Activated CD4-positive, alpha-beta T cell treated with anti-CD3 and anti-CD28 coated beads for 36 hours (primary cell): ENCODE measurements at regions of chr17 and their contacts with region 1.

Region 1: GRCh38 chr17:57783106-57783742 is 38.1 kb upstream of the CCDC182 start:
- DNase-seq: peak; percentile 91
- ATAC-seq: peak; percentile 97
- H3K4me3 Mint-ChIP-seq: no peak overlapping the region
- H3K27ac Mint-ChIP-seq: no peak overlapping the region
- H3K4me1 Mint-ChIP-seq: peaks cover 2% of the 10 kb centered on the region
- H3K27me3 Mint-ChIP-seq: peaks cover 21% of the 10 kb centered on the region

Region 2: GRCh38 chr17:57130761-57131461 is 652.3 kb before region 1 on chr17:
- CTCF ChIA-PET with region 1: interaction called, 3 read pairs
- POLR2A ChIA-PET with region 1: no interaction called
- intact Hi-C with region 1: loop called in 1 of 2 experiments (anchors 1 kb)
- DNase-seq: peak; percentile 91
- ATAC-seq: peak; percentile 84
- H3K4me3 Mint-ChIP-seq: no peak overlapping the region
- H3K27ac Mint-ChIP-seq: no peak overlapping the region
- H3K4me1 Mint-ChIP-seq: peaks cover 5% of the 10 kb centered on the region
- H3K27me3 Mint-ChIP-seq: no peaks in the 10 kb centered on the region

Region 3: DNA sequence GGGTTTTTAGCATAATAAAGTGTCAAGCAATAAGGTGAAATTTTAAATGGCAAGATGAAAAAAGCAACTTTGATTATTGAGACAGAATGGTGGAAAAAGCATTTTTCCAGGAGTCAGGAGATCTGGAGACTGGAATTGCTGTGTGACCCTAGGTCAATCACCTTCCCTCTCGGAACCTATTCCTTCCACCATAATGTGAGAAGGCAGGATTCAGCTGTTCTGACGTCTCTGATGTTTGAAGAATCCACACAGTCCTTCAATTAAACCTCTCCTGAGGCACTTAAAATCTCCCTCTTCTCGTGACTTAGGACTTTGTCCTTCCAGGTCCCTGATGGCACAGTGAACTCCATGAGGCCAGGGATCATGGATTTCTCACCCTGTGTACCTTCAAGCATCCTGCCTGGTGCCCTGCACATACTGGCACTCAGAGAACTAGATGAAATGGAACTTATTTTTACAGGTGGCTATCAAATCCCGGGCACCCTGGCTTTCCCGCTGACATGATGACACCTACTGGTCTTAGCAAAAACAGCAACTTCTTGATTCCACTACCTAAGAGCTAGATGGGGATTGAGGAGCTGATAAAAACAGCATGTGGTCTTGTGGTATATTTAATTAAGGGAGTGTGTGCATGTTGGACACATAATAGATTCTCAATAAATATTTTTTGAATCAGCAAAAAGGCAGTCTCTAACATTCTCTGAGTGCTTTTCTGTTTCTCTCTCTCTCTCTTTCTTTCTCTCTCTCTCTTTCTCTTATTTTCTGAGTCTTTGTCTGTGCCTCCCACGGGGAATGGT is 35.8 kb before region 1 on chr17:
- CTCF ChIA-PET with region 1: interaction called, 26 read pairs
- POLR2A ChIA-PET with region 1: no interaction called
- intact Hi-C with region 1: no loop called
- DNase-seq: peak; percentile 64
- ATAC-seq: peak; percentile 68
- H3K4me3 Mint-ChIP-seq: no peak overlapping the region
- H3K27ac Mint-ChIP-seq: no peak overlapping the region
- H3K4me1 Mint-ChIP-seq: no peaks in the 10 kb centered on the region
- H3K27me3 Mint-ChIP-seq: peaks cover 2% of the 10 kb centered on the region

Region 4: DNA sequence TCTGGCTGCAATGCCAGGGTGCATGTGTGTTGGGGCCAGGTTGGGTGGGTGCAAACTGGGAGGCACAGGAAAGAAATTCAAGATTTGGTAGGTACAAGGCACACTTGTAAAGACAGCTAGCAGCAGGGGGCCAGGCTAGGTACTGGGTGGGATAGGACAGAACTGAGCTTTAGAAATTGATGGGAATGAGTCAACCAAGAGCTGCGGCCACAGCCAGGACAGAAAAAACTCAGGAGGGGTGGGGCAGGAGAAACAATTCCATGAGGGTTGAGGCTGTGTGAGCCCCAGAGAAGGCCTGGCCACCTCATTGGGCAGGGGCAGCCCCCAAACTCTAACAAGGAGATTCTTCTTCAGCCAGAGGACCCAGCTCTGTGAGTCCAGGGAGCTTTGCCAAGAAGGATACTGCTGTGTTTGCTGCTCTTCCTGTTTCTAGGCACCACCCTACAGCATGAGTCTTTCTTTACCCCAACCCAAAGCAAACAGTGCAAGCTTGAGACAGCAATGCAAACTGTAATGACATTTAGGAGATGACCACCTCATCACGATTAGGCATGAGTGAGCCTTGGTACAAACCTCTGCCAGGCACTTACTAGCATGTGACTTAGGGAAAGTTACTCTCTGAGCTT is 16.8 kb before region 1 on chr17:
- CTCF ChIA-PET with region 1: interaction called, 14 read pairs
- POLR2A ChIA-PET with region 1: no interaction called
- intact Hi-C with region 1: no loop called
- DNase-seq: no peak
- ATAC-seq: no peak
- H3K4me3 Mint-ChIP-seq: no peak overlapping the region
- H3K27ac Mint-ChIP-seq: no peak overlapping the region
- H3K4me1 Mint-ChIP-seq: no peaks in the 10 kb centered on the region
- H3K27me3 Mint-ChIP-seq: peaks cover 14% of the 10 kb centered on the region

Region 5: GRCh38 chr17:57772774-57773173 is 10.4 kb before region 1 on chr17:
- CTCF ChIA-PET with region 1: interaction called, 18 read pairs
- POLR2A ChIA-PET with region 1: no interaction called
- intact Hi-C with region 1: no loop called
- DNase-seq: no peak
- ATAC-seq: no peak
- H3K4me3 Mint-ChIP-seq: no peak overlapping the region
- H3K27ac Mint-ChIP-seq: no peak overlapping the region
- H3K4me1 Mint-ChIP-seq: no peaks in the 10 kb centered on the region
- H3K27me3 Mint-ChIP-seq: peaks cover 40% of the 10 kb centered on the region

Region 6: GRCh38 chr17:57794841-57795240 is 11.6 kb after region 1 on chr17:
- CTCF ChIA-PET with region 1: interaction called, 11 read pairs
- POLR2A ChIA-PET with region 1: no interaction called
- intact Hi-C with region 1: no loop called
- DNase-seq: no peak
- ATAC-seq: no peak
- H3K4me3 Mint-ChIP-seq: no peak overlapping the region
- H3K27ac Mint-ChIP-seq: no peak overlapping the region
- H3K4me1 Mint-ChIP-seq: peaks cover 7% of the 10 kb centered on the region
- H3K27me3 Mint-ChIP-seq: peaks cover 2% of the 10 kb centered on the region

Region 7: DNA sequence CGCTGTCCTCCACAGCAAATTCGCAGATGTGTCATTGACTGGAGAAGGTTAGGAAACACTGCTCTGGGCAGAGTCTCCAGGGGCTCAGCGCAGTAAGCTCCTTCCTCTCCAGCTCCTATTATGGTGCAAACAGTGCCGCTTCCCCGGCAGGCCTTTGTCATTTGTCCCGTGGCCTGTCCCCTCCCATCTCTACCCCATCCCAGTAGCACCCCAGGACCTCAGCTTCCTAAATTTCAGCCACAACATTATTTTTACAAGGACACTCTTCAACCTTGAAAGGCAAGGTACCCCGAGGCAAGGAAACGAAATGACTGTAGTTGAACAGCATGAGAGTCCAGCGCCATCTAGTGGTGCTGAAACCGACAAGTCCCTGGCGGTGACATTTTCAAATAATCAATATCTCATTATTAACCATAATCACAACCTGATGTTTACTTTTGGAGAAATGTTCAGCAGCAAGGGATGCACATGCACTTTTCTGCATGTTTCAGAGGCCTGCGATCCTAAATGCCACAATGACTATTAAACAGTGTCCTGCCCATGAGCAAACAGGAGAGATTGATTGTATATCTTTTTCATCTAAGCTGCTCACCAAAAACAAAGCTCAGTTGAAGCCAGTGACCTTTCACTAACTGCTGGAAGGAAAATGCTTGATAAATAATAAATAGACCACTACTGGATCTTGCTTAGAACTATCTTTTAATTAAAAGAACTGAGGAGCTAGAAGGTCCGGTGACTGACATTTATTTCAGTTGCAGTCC is 50.1 kb after region 1 on chr17:
- CTCF ChIA-PET with region 1: interaction called, 15 read pairs
- POLR2A ChIA-PET with region 1: no interaction called
- intact Hi-C with region 1: no loop called
- DNase-seq: peak; percentile 84
- ATAC-seq: peak; percentile 86
- H3K4me3 Mint-ChIP-seq: no peak overlapping the region
- H3K27ac Mint-ChIP-seq: no peak overlapping the region
- H3K4me1 Mint-ChIP-seq: peaks cover 7% of the 10 kb centered on the region
- H3K27me3 Mint-ChIP-seq: no peaks in the 10 kb centered on the region

Region 8: GRCh38 chr17:57939797-57940196 is 156.6 kb after region 1 on chr17:
- CTCF ChIA-PET with region 1: no interaction called
- POLR2A ChIA-PET with region 1: no interaction called
- intact Hi-C with region 1: no loop called
- DNase-seq: peak; percentile 27
- ATAC-seq: peak; percentile 52
- H3K4me3 Mint-ChIP-seq: no peak overlapping the region
- H3K27ac Mint-ChIP-seq: no peak overlapping the region
- H3K4me1 Mint-ChIP-seq: peaks cover 21% of the 10 kb centered on the region
- H3K27me3 Mint-ChIP-seq: peaks cover 13% of the 10 kb centered on the region

Region 9: DNA sequence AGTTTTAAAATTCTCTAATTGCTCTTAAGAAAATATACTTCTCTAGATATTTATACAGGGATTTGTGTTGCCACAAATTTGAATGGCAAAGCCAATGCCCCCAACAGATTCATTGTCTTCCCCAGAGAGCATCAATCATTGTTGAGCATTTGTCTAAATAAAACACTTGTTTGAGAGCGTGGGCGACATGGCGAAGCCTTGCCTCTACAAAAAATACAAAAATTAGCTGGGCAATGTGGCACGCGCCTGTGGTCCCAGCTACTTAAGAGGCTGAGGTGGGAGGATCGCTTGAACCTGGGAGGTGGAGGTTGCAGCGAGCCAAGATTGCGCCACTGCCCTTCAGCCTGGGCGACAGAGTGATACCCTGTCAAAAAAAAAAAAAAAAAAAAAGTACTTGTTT is 237.2 kb after region 1 on chr17:
- CTCF ChIA-PET with region 1: no interaction called
- POLR2A ChIA-PET with region 1: no interaction called
- intact Hi-C with region 1: no loop called
- DNase-seq: no peak
- ATAC-seq: no peak
- H3K4me3 Mint-ChIP-seq: no peak overlapping the region
- H3K27ac Mint-ChIP-seq: no peak overlapping the region
- H3K4me1 Mint-ChIP-seq: no peaks in the 10 kb centered on the region
- H3K27me3 Mint-ChIP-seq: peaks cover 17% of the 10 kb centered on the region